Common myeloid progenitor, CD34-positive (primary cell): ENCODE measurements at regions of chr1 and their contacts with region 1.

Region 1: GRCh38 chr1:32122151-32122550 is 14.3 kb downstream of the KPNA6 start:
- DNase-seq: peak; percentile 44 to 87 (median 76)
- H3K4me3 ChIP-seq: peak overlapping the region in 4 of 7 experiments; percentile 4 to 64 (median 28)
- H3K27ac ChIP-seq: peak overlapping the region; percentile 15 to 49
- H3K4me1 ChIP-seq: peaks cover 9 to 35% (median 25%) of the 10 kb centered on the region in 4 experiments
- H3K27me3 ChIP-seq: no peaks in the 10 kb centered on the region

Region 2: GRCh38 chr1:32107742-32108661 is 14.1 kb before region 1 on chr1 and contains the start of gene KPNA6:
- CTCF ChIA-PET with region 1: interaction called, 24 read pairs
- POLR2A ChIA-PET with region 1: interaction called, 4 read pairs
- DNase-seq: peak; percentile 97 to 98 (median 98)
- H3K4me3 ChIP-seq: peak within 1 kb of the TSS; percentile 71 to 99 (median 94)
- H3K27ac ChIP-seq: peak within 1 kb of the TSS; percentile 94 to 98
- H3K4me1 ChIP-seq: peaks cover 9 to 27% (median 15%) of the 10 kb centered on the region in 4 experiments
- H3K27me3 ChIP-seq: no peaks in the 10 kb centered on the region

Region 3: GRCh38 chr1:32179193-32179442 is 57.0 kb after region 1 on chr1:
- CTCF ChIA-PET with region 1: no interaction called
- POLR2A ChIA-PET with region 1: no interaction called
- DNase-seq: no peak
- H3K4me3 ChIP-seq: peak overlapping the region in 6 of 7 experiments; percentile 25 to 89 (median 72)
- H3K27ac ChIP-seq: peak overlapping the region in 1 of 2 experiments; percentile 89
- H3K4me1 ChIP-seq: peaks cover 0 to 35% (median 29%) of the 10 kb centered on the region in 4 experiments
- H3K27me3 ChIP-seq: no peaks in the 10 kb centered on the region